Uterus (tissue), 4 donors: ENCODE measurements at regions of chr7 and their contacts with region 1.

Region 1: GRCh38 chr7:95596198-95597063 is at the start of gene PDK4:
- DNase-seq: peak; percentile 92 to 98
- H3K4me3 ChIP-seq: peak within 1 kb of the TSS; percentile 84 to 95
- H3K27ac ChIP-seq: peak within 1 kb of the TSS; percentile 97 to 98
- H3K4me1 ChIP-seq: no peaks in the 10 kb centered on the region
- H3K27me3 ChIP-seq: no peaks in the 10 kb centered on the region
- CTCF ChIP-seq: peak in 1 of 4 experiments; percentile 5
- POLR2A ChIP-seq: peak; percentile 86 to 89
- total RNA-seq, gene PDK4: 12.0 to 509 (median 177) TPM

Region 2: DNA sequence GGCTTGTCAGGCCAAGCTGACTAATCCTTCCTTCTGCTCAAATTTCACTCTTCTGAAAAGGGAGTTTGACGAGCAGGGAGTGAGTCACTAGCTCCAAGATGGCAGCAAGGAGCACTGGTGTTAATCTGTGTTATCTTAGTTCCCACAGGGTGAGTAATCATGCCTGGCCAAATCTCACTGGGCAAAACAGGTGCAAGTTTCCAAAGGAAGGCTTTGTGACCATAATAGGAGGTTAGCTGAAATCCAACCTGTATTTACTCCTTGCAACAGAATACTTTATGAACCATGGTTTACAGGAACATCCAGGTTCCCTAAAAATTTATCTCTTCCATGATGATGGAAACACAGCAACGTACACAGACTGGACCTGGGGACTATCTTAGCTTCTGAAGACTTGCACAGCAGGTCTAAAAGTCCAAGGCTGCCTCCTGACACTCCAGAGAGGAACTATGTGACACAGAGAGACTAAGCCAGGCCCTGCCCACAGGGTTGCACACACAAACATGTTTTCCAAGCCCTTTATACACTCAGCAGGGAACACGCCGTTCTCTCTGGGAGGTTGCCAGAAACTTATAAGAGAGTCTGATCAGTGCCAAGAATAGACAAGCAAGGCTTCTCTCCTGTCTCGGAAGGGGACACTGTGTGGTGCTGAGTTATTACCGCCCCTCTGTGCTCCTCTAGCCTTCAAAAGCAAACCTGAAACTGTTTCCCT is 46.5 kb before region 1 on chr7:
- intact Hi-C with region 1: loop called (anchors 5 kb)
- DNase-seq: peak; percentile 86 to 98
- H3K4me3 ChIP-seq: no peak overlapping the region
- H3K27ac ChIP-seq: peak overlapping the region; percentile 91 to 97
- H3K4me1 ChIP-seq: peaks cover 9 to 18% of the 10 kb centered on the region in 2 donors
- H3K27me3 ChIP-seq: no peaks in the 10 kb centered on the region
- CTCF ChIP-seq: no peak
- POLR2A ChIP-seq: peak; percentile 51 to 57